Naive thymus-derived CD4-positive, alpha-beta T cell (primary cell): ENCODE measurements at regions of chr11 and their contacts with region 1.

Region 1: GRCh38 chr11:2885676-2886081 is at the start of gene CDKN1C:
- DNase-seq: peak; percentile 82 to 87 (median 85)
- ATAC-seq: peak; percentile 95
- H3K4me3 ChIP-seq: peak within 1 kb of the TSS; percentile 75
- H3K4me3 Mint-ChIP-seq: peak within 1 kb of the TSS; percentile 85 to 96 (median 92)
- H3K27ac ChIP-seq: peak within 1 kb of the TSS; percentile 68
- H3K27ac Mint-ChIP-seq: peak within 1 kb of the TSS in 8 of 9 donors; percentile 26 to 93 (median 80)
- H3K4me1 ChIP-seq: peaks cover 5 to 7% of the 10 kb centered on the region in 2 donors
- H3K4me1 Mint-ChIP-seq: peaks cover 0 to 32% (median 22%) of the 10 kb centered on the region in 7 donors
- H3K27me3 ChIP-seq: no peaks in the 10 kb centered on the region
- H3K27me3 Mint-ChIP-seq: peaks cover 0 to 43% (median 0%) of the 10 kb centered on the region in 5 donors
- total RNA-seq, gene CDKN1C: 0.53 to 36.0 (median 6.0) TPM

Region 2: GRCh38 chr11:2298795-2299761 is 586.6 kb before region 1 on chr11:
- CTCF ChIA-PET with region 1: no interaction called
- POLR2A ChIA-PET with region 1: no interaction called
- intact Hi-C with region 1: loop called (anchors 5 to 10 kb)
- DNase-seq: peak in 2 of 9 donors; percentile 30 to 32
- ATAC-seq: no peak
- H3K4me3 ChIP-seq: no peak overlapping the region
- H3K4me3 Mint-ChIP-seq: peak overlapping the region; percentile 52 to 98 (median 75)
- H3K27ac ChIP-seq: peak overlapping the region; percentile 58
- H3K27ac Mint-ChIP-seq: peak overlapping the region; percentile 63 to 91 (median 79)
- H3K4me1 ChIP-seq: peaks cover 30 to 44% of the 10 kb centered on the region in 2 donors
- H3K4me1 Mint-ChIP-seq: peaks cover 19 to 51% (median 38%) of the 10 kb centered on the region in 7 donors
- H3K27me3 ChIP-seq: no peaks in the 10 kb centered on the region
- H3K27me3 Mint-ChIP-seq: peaks cover 0 to 5% (median 0%) of the 10 kb centered on the region in 5 donors

Region 3: DNA sequence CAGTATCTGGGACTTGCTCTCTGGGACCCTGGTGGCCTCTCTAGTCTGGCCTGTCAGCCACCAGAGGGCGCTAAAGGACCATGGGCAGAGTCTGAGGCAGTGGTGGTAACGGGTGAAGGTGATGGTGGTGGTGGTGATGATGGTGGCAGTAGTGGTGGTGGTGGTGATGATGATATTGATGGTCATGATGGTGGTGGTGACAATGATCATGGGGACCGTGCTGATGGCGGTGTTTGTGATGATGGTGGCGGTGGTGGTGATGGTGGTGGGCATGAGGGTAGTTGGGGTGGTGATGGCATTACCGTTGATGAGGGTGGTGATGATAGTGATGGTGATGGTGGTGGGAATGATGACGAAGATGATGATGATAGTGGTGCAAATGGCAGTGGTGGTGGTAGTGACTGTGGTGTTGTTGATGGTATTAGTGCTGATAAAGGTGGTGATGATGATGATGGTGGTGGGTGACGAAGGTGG is 457.3 kb before region 1 on chr11:
- CTCF ChIA-PET with region 1: no interaction called
- POLR2A ChIA-PET with region 1: no interaction called
- intact Hi-C with region 1: loop called (anchors 1 kb)
- DNase-seq: peak; percentile 67 to 85 (median 79)
- ATAC-seq: peak; percentile 87
- H3K4me3 ChIP-seq: no peak overlapping the region
- H3K4me3 Mint-ChIP-seq: no peak overlapping the region
- H3K27ac ChIP-seq: no peak overlapping the region
- H3K27ac Mint-ChIP-seq: no peak overlapping the region
- H3K4me1 ChIP-seq: no peaks in the 10 kb centered on the region
- H3K4me1 Mint-ChIP-seq: peaks cover 0 to 4% (median 0%) of the 10 kb centered on the region in 7 donors
- H3K27me3 ChIP-seq: no peaks in the 10 kb centered on the region
- H3K27me3 Mint-ChIP-seq: no peaks in the 10 kb centered on the region

Region 4: DNA sequence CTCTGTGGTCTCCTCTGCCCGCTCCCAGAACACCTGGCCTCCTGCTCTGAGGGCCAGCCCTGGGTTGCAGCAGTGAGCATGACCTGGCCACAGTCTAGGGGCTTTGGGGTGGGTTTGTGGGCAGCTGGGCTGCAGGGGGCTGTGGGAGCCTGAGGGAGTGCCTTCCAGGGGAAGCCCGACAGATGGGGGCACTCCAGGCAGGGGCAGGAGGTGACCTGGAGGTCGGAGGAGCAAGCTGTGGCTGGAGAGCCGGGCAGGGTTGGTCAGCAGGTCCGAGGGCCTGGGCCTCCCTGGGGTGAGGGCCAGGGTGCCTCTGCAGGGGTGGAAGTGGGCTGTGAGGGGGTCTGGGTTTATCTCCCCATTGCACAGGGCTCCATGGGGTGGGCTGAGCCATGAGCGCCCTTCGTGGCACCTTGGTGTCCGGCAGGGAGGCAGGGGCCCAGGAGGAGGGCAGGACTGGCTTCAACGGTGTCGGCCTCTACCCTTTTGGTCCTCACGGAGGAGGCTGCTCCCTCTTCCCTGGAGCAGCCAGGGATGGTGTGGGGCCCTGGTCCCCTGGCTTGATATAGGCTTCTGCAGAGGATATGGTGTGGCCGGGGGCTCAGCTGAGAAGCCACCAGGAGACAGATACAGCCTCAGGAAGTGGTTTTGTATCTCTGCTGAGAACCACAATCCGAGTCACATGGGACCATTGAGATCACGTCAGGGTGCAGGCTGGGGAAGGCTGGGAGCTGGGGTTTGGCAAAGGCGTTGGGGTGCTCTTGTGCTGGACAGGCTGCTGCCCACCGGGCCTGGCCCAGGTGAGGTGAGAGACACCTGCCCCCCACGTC is 418.6 kb before region 1 on chr11:
- CTCF ChIA-PET with region 1: no interaction called
- POLR2A ChIA-PET with region 1: no interaction called
- intact Hi-C with region 1: loop called in 1 of 2 experiments (anchors 1 kb)
- DNase-seq: peak in 8 of 9 donors; percentile 53 to 80 (median 74)
- ATAC-seq: peak; percentile 95
- H3K4me3 ChIP-seq: peak overlapping the region; percentile 45
- H3K4me3 Mint-ChIP-seq: peak overlapping the region; percentile 75 to 93 (median 84)
- H3K27ac ChIP-seq: peak overlapping the region; percentile 52
- H3K27ac Mint-ChIP-seq: peak overlapping the region; percentile 57 to 96 (median 79)
- H3K4me1 ChIP-seq: peaks cover 17 to 57% of the 10 kb centered on the region in 2 donors
- H3K4me1 Mint-ChIP-seq: peaks cover 35 to 93% (median 65%) of the 10 kb centered on the region in 7 donors
- H3K27me3 ChIP-seq: no peaks in the 10 kb centered on the region
- H3K27me3 Mint-ChIP-seq: peaks cover 0 to 12% (median 0%) of the 10 kb centered on the region in 5 donors

Region 5: DNA sequence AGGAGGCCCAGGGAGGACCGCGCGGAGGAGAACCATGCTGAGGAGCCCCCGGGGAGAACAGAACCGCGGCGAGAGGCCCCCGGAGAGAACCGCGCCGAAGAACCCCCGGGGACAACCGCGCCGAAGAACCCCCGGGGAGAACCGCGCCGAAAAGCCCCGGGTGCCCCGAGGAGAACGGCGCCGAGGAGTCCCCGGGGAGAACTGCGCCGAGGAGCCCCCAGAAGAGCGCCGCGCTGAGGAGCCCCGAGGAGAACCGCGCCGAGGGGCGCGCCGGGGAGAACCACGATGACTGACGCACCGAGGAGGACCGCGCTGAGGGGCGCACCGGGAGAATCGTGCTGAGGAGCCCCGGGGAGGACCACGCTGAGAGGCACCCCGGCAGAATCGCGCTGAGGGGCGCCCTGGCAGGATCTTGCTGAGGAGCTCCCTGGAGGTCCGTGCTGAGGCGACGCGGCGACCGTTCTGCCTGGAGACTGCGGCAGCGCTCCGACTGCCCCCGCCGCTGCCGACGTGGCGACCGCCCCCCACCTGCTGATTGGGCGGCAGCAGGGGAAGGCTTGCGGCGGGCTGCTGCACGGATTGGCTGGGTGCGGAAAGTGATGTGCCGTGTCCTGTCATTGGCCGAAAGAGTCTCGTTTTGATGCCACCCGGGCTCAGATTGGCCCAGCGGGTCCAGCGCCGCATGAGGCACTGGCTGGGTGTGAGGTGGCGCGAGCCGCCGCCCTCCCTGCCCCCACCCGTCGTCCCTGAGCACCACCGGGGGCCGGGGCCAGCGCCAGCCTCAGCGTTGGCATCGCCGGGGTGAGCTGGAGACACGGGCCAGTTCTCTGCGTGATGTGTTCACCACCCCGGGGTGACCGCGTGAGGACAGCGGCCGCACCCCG is 185.9 kb before region 1 on chr11 and contains the start of gene KCNQ1OT1:
- CTCF ChIA-PET with region 1: interaction called, 3 read pairs
- POLR2A ChIA-PET with region 1: no interaction called
- intact Hi-C with region 1: loop called (anchors 1 kb)
- DNase-seq: peak; percentile 72 to 89 (median 85)
- ATAC-seq: peak; percentile 96
- H3K4me3 ChIP-seq: peak within 1 kb of the TSS; percentile 57
- H3K4me3 Mint-ChIP-seq: peak within 1 kb of the TSS; percentile 27 to 89 (median 72)
- H3K27ac ChIP-seq: peak within 1 kb of the TSS; percentile 61
- H3K27ac Mint-ChIP-seq: peak within 1 kb of the TSS in 6 of 9 donors; percentile 14 to 77 (median 50)
- H3K4me1 ChIP-seq: peaks cover 2 to 4% of the 10 kb centered on the region in 2 donors
- H3K4me1 Mint-ChIP-seq: peaks cover 0 to 20% (median 10%) of the 10 kb centered on the region in 7 donors
- H3K27me3 ChIP-seq: no peaks in the 10 kb centered on the region
- H3K27me3 Mint-ChIP-seq: peaks cover 0 to 5% (median 0%) of the 10 kb centered on the region in 5 donors
- total RNA-seq, gene KCNQ1OT1: 0.16 to 0.56 (median 0.24) TPM

Region 6: GRCh38 chr11:2930704-2931428 is 45.2 kb after region 1 on chr11:
- CTCF ChIA-PET with region 1: interaction called, 6 read pairs
- POLR2A ChIA-PET with region 1: no interaction called
- intact Hi-C with region 1: loop called in 1 of 2 experiments (anchors 1 kb)
- DNase-seq: peak in 1 of 9 donors; percentile 61
- ATAC-seq: peak; percentile 14
- H3K4me3 ChIP-seq: peak overlapping the region; percentile 61
- H3K4me3 Mint-ChIP-seq: peak overlapping the region; percentile 66 to 86 (median 78)
- H3K27ac ChIP-seq: no peak overlapping the region
- H3K27ac Mint-ChIP-seq: peak overlapping the region in 4 of 9 donors; percentile 32 to 76 (median 46)
- H3K4me1 ChIP-seq: peaks cover 13 to 20% of the 10 kb centered on the region in 2 donors
- H3K4me1 Mint-ChIP-seq: peaks cover 14 to 35% (median 20%) of the 10 kb centered on the region in 7 donors
- H3K27me3 ChIP-seq: peaks cover 3 to 4% of the 10 kb centered on the region in 2 donors
- H3K27me3 Mint-ChIP-seq: peaks cover 4 to 30% (median 8%) of the 10 kb centered on the region in 5 donors

Region 7: DNA sequence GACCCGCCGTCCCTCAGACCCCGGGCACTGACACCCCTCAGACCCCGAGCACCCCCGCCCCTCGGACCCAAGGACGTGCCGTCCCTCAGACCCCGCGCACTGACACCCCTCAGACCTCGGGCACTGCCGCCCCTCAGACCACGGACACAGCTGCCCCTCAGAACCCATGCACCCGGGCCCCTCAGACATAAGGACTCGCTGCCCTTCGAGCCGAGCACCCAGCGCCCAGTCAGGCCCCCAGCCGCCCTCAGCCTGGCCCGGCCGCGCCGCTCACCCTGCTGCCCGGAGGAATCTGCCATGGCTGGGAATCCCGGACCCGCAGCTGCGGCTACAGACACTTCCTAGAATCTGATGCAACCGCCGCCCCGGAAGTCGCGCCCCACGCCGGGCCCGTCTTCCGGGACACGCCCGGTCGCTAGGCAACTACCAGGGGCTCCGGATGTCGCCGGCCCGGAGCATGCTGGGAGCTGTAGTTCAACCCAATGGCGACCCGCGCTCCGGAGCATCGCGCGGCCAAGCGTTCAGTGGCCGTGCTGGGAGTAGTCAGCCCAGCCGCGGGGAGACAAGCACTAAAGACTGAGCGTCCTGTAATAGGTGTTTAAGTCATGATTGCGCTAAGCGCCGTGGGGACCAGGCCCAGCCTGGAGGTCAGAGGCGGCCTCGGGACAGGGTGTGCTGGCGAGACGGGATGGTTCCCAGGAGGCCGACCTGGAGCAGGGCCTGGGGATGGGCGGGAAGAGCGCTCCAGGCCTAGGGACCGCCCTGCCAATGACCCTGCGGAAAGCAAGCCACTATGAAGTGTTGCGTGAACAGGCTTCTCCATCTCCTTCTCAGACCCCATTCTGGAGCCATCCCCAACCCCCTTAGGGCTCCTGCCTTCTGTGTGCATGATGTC is 171.6 kb after region 1 on chr11 and contains the start of gene CARS1:
- CTCF ChIA-PET with region 1: no interaction called
- POLR2A ChIA-PET with region 1: no interaction called
- intact Hi-C with region 1: loop called in 1 of 2 experiments (anchors 1 kb)
- DNase-seq: peak; percentile 82 to 93 (median 89)
- ATAC-seq: peak; percentile 99
- H3K4me3 ChIP-seq: peak within 1 kb of the TSS; percentile 85
- H3K4me3 Mint-ChIP-seq: peak within 1 kb of the TSS; percentile 86 to 95 (median 89)
- H3K27ac ChIP-seq: peak within 1 kb of the TSS; percentile 91
- H3K27ac Mint-ChIP-seq: peak within 1 kb of the TSS; percentile 44 to 89 (median 87)
- H3K4me1 ChIP-seq: peaks cover 14% of the 10 kb centered on the region in 2 donors
- H3K4me1 Mint-ChIP-seq: peaks cover 25 to 42% (median 39%) of the 10 kb centered on the region in 7 donors
- H3K27me3 ChIP-seq: no peaks in the 10 kb centered on the region
- H3K27me3 Mint-ChIP-seq: no peaks in the 10 kb centered on the region
- total RNA-seq, gene CARS1: 27.8 to 70.4 (median 53.7) TPM